ENCODE measurements at regions of chr6 and their contacts with region 1.

Region 1: GRCh38 chr6:163427498-163428254 is 13.2 kb downstream of the QKI start:
- DNase-seq: no peak
- ATAC-seq: peak; percentile 26
- H3K4me3 ChIP-seq: no peak overlapping the region
- H3K4me1 ChIP-seq: peaks cover 14% of the 10 kb centered on the region
- CTCF ChIP-seq: no peak

Region 2: DNA sequence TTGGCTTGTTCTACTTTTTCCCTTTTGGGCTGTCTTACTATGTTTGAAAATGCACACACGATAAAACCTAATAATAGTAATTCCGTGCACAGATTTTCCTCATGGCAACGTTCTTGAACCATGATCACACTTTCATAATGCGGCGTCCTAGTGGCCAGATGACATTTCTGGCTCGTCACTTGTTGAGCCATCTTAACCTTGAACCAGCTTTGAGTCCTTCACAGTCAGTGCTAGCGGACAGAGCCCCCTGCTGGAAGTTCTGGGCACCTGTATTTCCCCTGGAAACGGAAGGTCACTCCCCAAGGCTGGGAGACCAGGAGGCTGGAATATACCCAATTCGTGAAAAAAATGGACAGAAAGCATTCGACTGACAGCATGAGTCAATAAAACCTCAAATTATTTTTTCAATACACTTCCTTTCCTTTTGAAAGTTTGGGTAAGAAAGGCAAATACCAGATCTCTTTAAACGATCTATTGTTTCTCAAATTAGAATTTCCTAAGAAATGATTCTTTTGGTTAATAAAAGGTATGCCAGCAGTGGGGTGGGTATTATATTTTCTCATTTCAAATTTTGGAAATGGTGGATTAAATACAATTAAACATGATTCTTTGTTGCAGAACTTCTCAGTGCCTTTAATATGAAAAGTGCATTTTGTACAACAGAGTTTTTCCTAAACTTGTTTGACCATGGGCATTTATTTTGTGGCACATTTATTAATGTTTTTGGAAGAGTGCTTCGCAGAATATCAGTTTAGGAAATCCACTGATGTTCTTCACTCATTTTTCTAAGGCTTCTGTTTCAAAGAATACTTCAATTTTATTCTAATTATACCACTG is 529.1 kb after region 1 on chr6:
- intact Hi-C with region 1: loop called in 1 of 2 experiments (anchors 5 kb)
- DNase-seq: peak in 2 of 3 donors; percentile 72 to 75
- ATAC-seq: peak; percentile 81
- H3K4me3 ChIP-seq: no peak overlapping the region
- H3K4me1 ChIP-seq: peaks cover 3% of the 10 kb centered on the region
- CTCF ChIP-seq: peak; percentile 59

Region 3: GRCh38 chr6:164927288-164928056 is 1499.8 kb after region 1 on chr6:
- intact Hi-C with region 1: loop called in 1 of 2 experiments (anchors 5 kb)
- DNase-seq: peak in 2 of 3 donors; percentile 56 to 58
- ATAC-seq: peak; percentile 73
- H3K4me3 ChIP-seq: no peak overlapping the region
- H3K4me1 ChIP-seq: no peaks in the 10 kb centered on the region
- CTCF ChIP-seq: peak; percentile 79

Measured in mucosa of descending colon (tissue), 3 donors.